Posterior vena cava (tissue), 2 donors: ENCODE measurements at regions of chr17 and their contacts with region 1.

Region 1: GRCh38 chr17:12282056-12282455 is 261.4 kb downstream of the MAP2K4 start:
- DNase-seq: no peak

Region 2: GRCh38 chr17:12313786-12314185 is 31.7 kb after region 1 on chr17:
- intact Hi-C with region 1: loop called in 1 of 2 experiments (anchors 2 kb)
- DNase-seq: no peak